GM12878 (cell line): ENCODE measurements at regions of chr5 and their contacts with region 1.

Region 1: GRCh38 chr5:88813805-88814575 is 69.0 kb downstream of the MEF2C start:
- DNase-seq: no peak
- ATAC-seq: peak; percentile 11; the same call in 2 of the 3 replicates
- H3K4me3 ChIP-seq: 0 out of 2 replicates have a peak overlapping the region, but pooled peaks have one; percentile 10
- H3K27ac ChIP-seq: no peak overlapping the region; the same call in 1 of the 2 replicates
- H3K4me1 ChIP-seq: peaks cover 29% of the 10 kb centered on the region
- H3K27me3 ChIP-seq: no peaks in the 10 kb centered on the region
- CTCF ChIP-seq: no peak
- EP300 ChIP-seq: no peak
- POLR2A ChIP-seq: no peak
- RAD21 ChIP-seq: no peak

Region 2: GRCh38 chr5:88583471-88583870 is 230.5 kb before region 1 on chr5:
- CTCF ChIA-PET with region 1: no interaction called
- POLR2A ChIA-PET with region 1: no interaction called
- RAD21 ChIA-PET with region 1: no interaction called
- SMC1A ChIA-PET with region 1: no interaction called
- in situ Hi-C with region 1: no loop called
- intact Hi-C with region 1: no loop called
- DNase-seq: no peak
- ATAC-seq: no peak
- H3K4me3 ChIP-seq: no peak overlapping the region
- H3K27ac ChIP-seq: no peak overlapping the region
- H3K4me1 ChIP-seq: no peaks in the 10 kb centered on the region
- H3K27me3 ChIP-seq: no peaks in the 10 kb centered on the region
- CTCF ChIP-seq: no peak
- EP300 ChIP-seq: no peak
- POLR2A ChIP-seq: no peak
- RAD21 ChIP-seq: no peak

Region 3: DNA sequence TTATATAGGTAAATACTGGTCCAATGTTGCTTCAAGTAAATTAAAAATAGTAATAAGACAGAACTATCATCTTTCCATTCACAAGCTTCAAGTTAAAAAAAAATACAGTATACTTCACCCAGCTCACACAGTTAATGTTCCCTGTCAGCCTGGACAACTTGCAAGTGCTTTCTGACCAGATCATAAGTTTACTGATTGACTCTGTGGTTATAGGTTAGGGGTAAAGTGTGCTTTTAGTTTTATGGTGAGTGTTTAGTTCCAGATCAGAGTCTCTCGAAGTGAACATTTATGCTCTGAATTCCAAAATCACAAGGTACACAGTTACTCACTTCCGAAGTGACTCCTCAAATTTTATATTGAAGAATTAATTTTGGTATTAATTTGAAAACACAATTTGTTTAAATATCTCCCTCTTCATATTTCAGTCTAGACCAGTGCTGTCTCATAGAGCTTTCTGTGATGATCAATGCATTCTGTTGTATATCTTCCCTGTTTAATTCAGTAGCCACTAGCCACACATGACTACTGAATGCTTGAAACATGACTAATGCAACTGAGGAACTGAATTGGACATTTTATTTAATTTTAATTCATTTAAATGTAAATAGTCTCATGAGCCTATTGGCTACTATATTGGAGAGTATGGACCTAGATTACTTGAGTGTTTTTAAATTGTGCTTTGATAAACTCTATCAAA is 21.7 kb before region 1 on chr5:
- CTCF ChIA-PET with region 1: interaction called, 3 read pairs
- POLR2A ChIA-PET with region 1: interaction called, 7 read pairs
- RAD21 ChIA-PET with region 1: interaction called, 6 read pairs
- SMC1A ChIA-PET with region 1: interaction called, 49 read pairs
- in situ Hi-C with region 1: no loop called
- intact Hi-C with region 1: no loop called
- DNase-seq: no peak
- ATAC-seq: peak; percentile 89
- H3K4me3 ChIP-seq: no peak overlapping the region
- H3K27ac ChIP-seq: no peak overlapping the region
- H3K4me1 ChIP-seq: peaks cover 1% of the 10 kb centered on the region; the same call in 1 of the 2 replicates
- H3K27me3 ChIP-seq: no peaks in the 10 kb centered on the region
- CTCF ChIP-seq: no peak
- EP300 ChIP-seq: no peak
- POLR2A ChIP-seq: no peak
- RAD21 ChIP-seq: no peak